ENCODE measurements at regions of chr3 and their contacts with region 1.

Region 1: GRCh38 chr3:52231502-52232293 is 6.3 kb upstream of the TLR9 start:
- DNase-seq: peak; percentile 91
- H3K4me3 Mint-ChIP-seq: no peak overlapping the region
- H3K27ac Mint-ChIP-seq: peak overlapping the region; percentile 74
- H3K4me1 Mint-ChIP-seq: peaks cover 55% of the 10 kb centered on the region
- H3K27me3 Mint-ChIP-seq: no peaks in the 10 kb centered on the region

Region 2: DNA sequence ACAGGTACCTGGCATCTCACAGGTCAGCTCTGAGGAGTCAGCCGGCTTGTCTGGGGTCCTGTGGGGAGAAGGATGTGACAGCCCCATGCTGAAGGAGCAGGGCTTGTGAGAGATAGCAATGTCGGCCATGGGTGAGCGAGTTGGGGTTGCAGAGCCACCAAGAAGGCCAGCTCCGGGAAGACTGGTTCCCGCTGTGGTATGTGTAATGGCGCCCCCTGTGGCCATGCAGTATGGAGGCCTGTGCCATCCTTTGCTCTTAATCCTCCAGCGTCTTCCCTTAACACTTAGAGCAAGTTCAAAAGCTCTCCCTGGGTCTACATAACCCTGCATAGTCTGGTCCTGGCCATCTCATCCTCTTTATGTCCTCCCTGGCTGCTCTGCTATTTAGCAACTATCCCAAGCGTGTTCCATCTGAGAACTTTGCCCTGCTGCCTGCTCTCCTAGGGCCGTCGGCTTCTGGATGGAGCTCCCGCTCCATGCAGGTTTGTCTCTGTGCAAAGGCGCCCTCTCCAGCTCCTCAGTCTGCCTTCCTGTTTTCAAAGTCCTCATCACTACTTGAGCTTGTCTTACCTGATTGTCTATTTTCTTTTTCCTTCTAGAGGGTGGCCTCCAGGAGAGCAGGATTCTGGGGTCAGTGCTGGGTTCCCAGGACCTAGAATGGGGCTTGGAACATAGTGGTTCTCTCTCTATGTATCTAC is 411.8 kb before region 1 on chr3:
- CTCF ChIA-PET with region 1: no interaction called
- DNase-seq: peak; percentile 29
- H3K4me3 Mint-ChIP-seq: no peak overlapping the region
- H3K27ac Mint-ChIP-seq: no peak overlapping the region
- H3K4me1 Mint-ChIP-seq: peaks cover 10% of the 10 kb centered on the region
- H3K27me3 Mint-ChIP-seq: peaks cover 28% of the 10 kb centered on the region

Region 3: GRCh38 chr3:52162250-52162872 is 69.3 kb before region 1 on chr3:
- CTCF ChIA-PET with region 1: no interaction called
- DNase-seq: no peak
- H3K4me3 Mint-ChIP-seq: no peak overlapping the region
- H3K27ac Mint-ChIP-seq: no peak overlapping the region
- H3K4me1 Mint-ChIP-seq: no peaks in the 10 kb centered on the region
- H3K27me3 Mint-ChIP-seq: peaks cover 27% of the 10 kb centered on the region

Region 4: GRCh38 chr3:52253314-52254304 is 21.9 kb after region 1 on chr3:
- CTCF ChIA-PET with region 1: interaction called, 13 read pairs
- DNase-seq: peak; percentile 91
- H3K4me3 Mint-ChIP-seq: peak overlapping the region; percentile 73
- H3K27ac Mint-ChIP-seq: peak overlapping the region; percentile 99
- H3K4me1 Mint-ChIP-seq: peaks cover 96% of the 10 kb centered on the region
- H3K27me3 Mint-ChIP-seq: no peaks in the 10 kb centered on the region

Region 5: GRCh38 chr3:52278510-52279069 is 46.9 kb after region 1 on chr3 and contains the start of gene WDR82:
- CTCF ChIA-PET with region 1: interaction called, 106 read pairs
- DNase-seq: peak; percentile 98
- H3K4me3 Mint-ChIP-seq: peak within 1 kb of the TSS; percentile 95
- H3K27ac Mint-ChIP-seq: peak within 1 kb of the TSS; percentile 98
- H3K4me1 Mint-ChIP-seq: peaks cover 57% of the 10 kb centered on the region
- H3K27me3 Mint-ChIP-seq: no peaks in the 10 kb centered on the region

Region 6: DNA sequence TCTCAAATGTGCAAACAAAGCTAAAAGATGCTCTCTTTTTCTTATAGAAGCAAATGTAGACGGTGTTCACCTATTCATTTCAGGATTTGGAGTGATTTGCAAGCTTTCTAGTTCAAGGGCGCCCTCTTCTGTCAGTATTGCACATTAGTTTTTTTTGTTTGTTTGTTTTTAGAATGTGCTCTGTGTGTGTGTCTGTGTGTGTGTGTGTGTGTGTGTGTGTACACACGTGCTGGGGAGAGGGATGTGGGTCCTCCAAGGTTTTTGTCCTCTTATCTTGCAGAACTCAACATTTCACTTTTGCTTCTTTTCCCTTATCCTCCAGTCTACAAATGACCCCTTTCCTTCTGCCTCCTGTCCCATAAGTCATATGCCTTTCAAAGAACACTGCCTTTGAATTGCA is 107.9 kb after region 1 on chr3:
- CTCF ChIA-PET with region 1: interaction called, 122 read pairs
- DNase-seq: peak; percentile 66
- H3K4me3 Mint-ChIP-seq: no peak overlapping the region
- H3K27ac Mint-ChIP-seq: peak overlapping the region; percentile 9
- H3K4me1 Mint-ChIP-seq: peaks cover 6% of the 10 kb centered on the region
- H3K27me3 Mint-ChIP-seq: no peaks in the 10 kb centered on the region

Region 7: GRCh38 chr3:52444860-52445793 is 213.4 kb after region 1 on chr3 and contains the start of gene SEMA3G:
- CTCF ChIA-PET with region 1: interaction called, 11 read pairs
- DNase-seq: peak; percentile 89
- H3K4me3 Mint-ChIP-seq: no peak within 1 kb of the TSS
- H3K27ac Mint-ChIP-seq: no peak within 1 kb of the TSS
- H3K4me1 Mint-ChIP-seq: peaks cover 13% of the 10 kb centered on the region
- H3K27me3 Mint-ChIP-seq: peaks cover 8% of the 10 kb centered on the region

Measured in activated naive CD4-positive, alpha-beta T cell treated with anti-CD3 and anti-CD28 coated beads, Interleukin-2, amount 10 ng/mL, durations not matched to agents 7 days and 5 days (primary cell).